ENCODE measurements at regions of chr11 and their contacts with region 1.

Region 1: GRCh38 chr11:65354265-65355012 is at the start of gene TIGD3:
- DNase-seq: peak; percentile 98 to 99 (median 99)
- ATAC-seq: peak; percentile 95
- H3K4me3 ChIP-seq: peak within 1 kb of the TSS; percentile 63
- H3K27ac ChIP-seq: peak within 1 kb of the TSS; percentile 66
- H3K4me1 ChIP-seq: peaks cover 25 to 48% of the 10 kb centered on the region in 2 experiments
- H3K27me3 ChIP-seq: no peaks in the 10 kb centered on the region
- CTCF ChIP-seq: 0 out of 6 replicates have a peak, but pooled peaks of 1 of the 3 experiments have one; percentile 2
- EP300 ChIP-seq: no peak
- POLR2A ChIP-seq: peak; percentile 42; the same call in 1 of the 2 replicates
- RAD21 ChIP-seq: no peak
- polyA plus RNA-seq, gene TIGD3: 0.06 to 0.08 TPM

Region 2: GRCh38 chr11:65338676-65339075 is 15.8 kb before region 1 on chr11:
- CTCF ChIA-PET with region 1: no interaction called
- POLR2A ChIA-PET with region 1: interaction called, 13 read pairs
- in situ Hi-C with region 1: no loop called
- intact Hi-C with region 1: no loop called
- DNase-seq: peak in 2 of 4 experiments; percentile 39 to 51
- ATAC-seq: peak; percentile 52
- H3K4me3 ChIP-seq: no peak overlapping the region
- H3K27ac ChIP-seq: peak overlapping the region; percentile 50
- H3K4me1 ChIP-seq: peaks cover 17 to 20% of the 10 kb centered on the region in 2 experiments; a peak in 4 of 5 replicates
- H3K27me3 ChIP-seq: no peaks in the 10 kb centered on the region
- CTCF ChIP-seq: no peak
- EP300 ChIP-seq: no peak
- POLR2A ChIP-seq: no peak
- RAD21 ChIP-seq: no peak

Region 3: GRCh38 chr11:65403607-65404121 is 49.2 kb after region 1 on chr11:
- CTCF ChIA-PET with region 1: no interaction called
- POLR2A ChIA-PET with region 1: no interaction called
- in situ Hi-C with region 1: no loop called
- intact Hi-C with region 1: no loop called
- DNase-seq: peak in 1 of 4 experiments; percentile 57
- ATAC-seq: peak; percentile 76
- H3K4me3 ChIP-seq: no peak overlapping the region
- H3K27ac ChIP-seq: peak overlapping the region; percentile 33; the same call in 2 of the 3 replicates
- H3K4me1 ChIP-seq: peaks cover 9 to 49% of the 10 kb centered on the region in 2 experiments
- H3K27me3 ChIP-seq: no peaks in the 10 kb centered on the region
- CTCF ChIP-seq: no peak
- EP300 ChIP-seq: no peak
- POLR2A ChIP-seq: no peak
- RAD21 ChIP-seq: no peak

Measured in K562 (cell line).